Activated T-helper 1 cell treated with anti-CD3 and anti-CD28 coated beads, Interleukin-12 subunit alpha, Interleukin-12 subunit beta, Interleukin-2, Interleukin-4 antibody, amounts not matched to agents 30 ng/mL and 10 ng/mL and 1 ng/mL, durations not matched to agents 14 hours and 24 hours and 36 hours (primary cell): ENCODE measurements at regions of chr9 and their contacts with region 1.

Region 1: GRCh38 chr9:129482521-129483414 is 138.1 kb downstream of the C9orf50 start:
- DNase-seq: no peak
- H3K4me3 Mint-ChIP-seq: peak overlapping the region; percentile 62
- H3K27ac Mint-ChIP-seq: peak overlapping the region; percentile 70
- H3K4me1 Mint-ChIP-seq: peaks cover 52% of the 10 kb centered on the region
- H3K27me3 Mint-ChIP-seq: peaks cover 12% of the 10 kb centered on the region

Region 2: DNA sequence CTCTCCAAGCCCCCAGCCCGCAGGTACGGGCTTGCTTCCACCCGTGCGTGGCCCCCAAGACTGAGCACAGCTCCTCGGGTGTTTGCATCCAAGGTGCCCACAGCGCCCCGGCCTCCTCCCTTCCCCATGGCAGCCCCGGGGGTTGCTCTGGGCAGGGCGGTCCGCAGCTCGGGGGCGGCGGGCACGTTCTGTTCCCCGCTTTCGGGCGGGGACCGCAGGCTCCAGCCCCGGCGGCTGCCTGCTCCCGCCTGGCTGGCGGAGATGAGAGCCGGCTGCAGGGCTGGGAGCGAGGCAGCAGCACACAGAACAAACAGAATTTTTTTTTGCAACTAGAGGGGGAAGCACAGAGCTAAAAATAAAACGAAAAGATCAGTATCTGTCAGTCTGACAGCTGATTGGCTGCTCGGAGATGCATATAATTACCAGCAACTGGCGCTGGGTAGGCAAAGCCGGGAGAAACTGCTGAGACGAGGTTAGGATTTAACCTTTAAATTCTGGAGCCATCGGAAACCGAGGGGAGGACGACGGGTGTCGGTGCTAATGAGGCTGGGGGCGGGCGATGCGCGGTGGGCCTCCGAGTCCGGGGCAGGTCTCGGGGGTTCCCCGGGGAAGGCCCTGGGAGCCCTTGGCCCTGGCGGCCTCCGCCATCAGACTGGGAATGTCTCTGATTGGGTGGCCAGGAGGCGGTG is 162.0 kb before region 1 on chr9:
- intact Hi-C with region 1: loop called (anchors 10 kb)
- DNase-seq: peak; percentile 42
- H3K4me3 Mint-ChIP-seq: peak overlapping the region; percentile 77
- H3K27ac Mint-ChIP-seq: peak overlapping the region; percentile 81
- H3K4me1 Mint-ChIP-seq: peaks cover 19% of the 10 kb centered on the region
- H3K27me3 Mint-ChIP-seq: peaks cover 6% of the 10 kb centered on the region

Region 3: GRCh38 chr9:130042833-130043653 is 560.3 kb after region 1 on chr9 and contains the start of gene FNBP1:
- intact Hi-C with region 1: loop called (anchors 10 kb)
- DNase-seq: peak; percentile 78
- H3K4me3 Mint-ChIP-seq: peak within 1 kb of the TSS; percentile 97
- H3K27ac Mint-ChIP-seq: peak within 1 kb of the TSS; percentile 99
- H3K4me1 Mint-ChIP-seq: peaks cover 55% of the 10 kb centered on the region
- H3K27me3 Mint-ChIP-seq: no peaks in the 10 kb centered on the region
- total RNA-seq, gene FNBP1: 195 and 202 TPM in 2 replicates